ENCODE measurements at regions of chr17 and their contacts with region 1.

Region 1: GRCh38 chr17:82236142-82236981 is 7.5 kb downstream of the SLC16A3 start:
- DNase-seq: peak; percentile 72
- ATAC-seq: peak; percentile 6 to 16

Region 2: GRCh38 chr17:82051776-82052637 is 184.4 kb before region 1 on chr17 and contains the starts of genes GPS1 and RFNG:
- intact Hi-C with region 1: no loop called
- DNase-seq: peak; percentile 86
- ATAC-seq: peak; percentile 63 to 84
- total RNA-seq, gene GPS1: 72.2 to 79.3 TPM
- total RNA-seq, gene RFNG: 16.4 to 22.4 TPM

Region 3: GRCh38 chr17:82173351-82174041 is 62.9 kb before region 1 on chr17:
- intact Hi-C with region 1: no loop called
- DNase-seq: no peak
- ATAC-seq: no peak

Region 4: GRCh38 chr17:82273327-82274133 is 37.2 kb after region 1 on chr17 and contains the start of gene CSNK1D:
- intact Hi-C with region 1: loop called in 1 of 2 experiments (anchors 5 kb)
- DNase-seq: peak; percentile 94
- ATAC-seq: peak; percentile 93 to 97
- total RNA-seq, gene CSNK1D: 63.6 to 88.2 TPM

Region 5: GRCh38 chr17:82292251-82293154 is 56.1 kb after region 1 on chr17:
- intact Hi-C with region 1: loop called in 1 of 2 experiments (anchors 10 kb)
- DNase-seq: peak; percentile 97
- ATAC-seq: peak; percentile 96 to 97

Region 6: DNA sequence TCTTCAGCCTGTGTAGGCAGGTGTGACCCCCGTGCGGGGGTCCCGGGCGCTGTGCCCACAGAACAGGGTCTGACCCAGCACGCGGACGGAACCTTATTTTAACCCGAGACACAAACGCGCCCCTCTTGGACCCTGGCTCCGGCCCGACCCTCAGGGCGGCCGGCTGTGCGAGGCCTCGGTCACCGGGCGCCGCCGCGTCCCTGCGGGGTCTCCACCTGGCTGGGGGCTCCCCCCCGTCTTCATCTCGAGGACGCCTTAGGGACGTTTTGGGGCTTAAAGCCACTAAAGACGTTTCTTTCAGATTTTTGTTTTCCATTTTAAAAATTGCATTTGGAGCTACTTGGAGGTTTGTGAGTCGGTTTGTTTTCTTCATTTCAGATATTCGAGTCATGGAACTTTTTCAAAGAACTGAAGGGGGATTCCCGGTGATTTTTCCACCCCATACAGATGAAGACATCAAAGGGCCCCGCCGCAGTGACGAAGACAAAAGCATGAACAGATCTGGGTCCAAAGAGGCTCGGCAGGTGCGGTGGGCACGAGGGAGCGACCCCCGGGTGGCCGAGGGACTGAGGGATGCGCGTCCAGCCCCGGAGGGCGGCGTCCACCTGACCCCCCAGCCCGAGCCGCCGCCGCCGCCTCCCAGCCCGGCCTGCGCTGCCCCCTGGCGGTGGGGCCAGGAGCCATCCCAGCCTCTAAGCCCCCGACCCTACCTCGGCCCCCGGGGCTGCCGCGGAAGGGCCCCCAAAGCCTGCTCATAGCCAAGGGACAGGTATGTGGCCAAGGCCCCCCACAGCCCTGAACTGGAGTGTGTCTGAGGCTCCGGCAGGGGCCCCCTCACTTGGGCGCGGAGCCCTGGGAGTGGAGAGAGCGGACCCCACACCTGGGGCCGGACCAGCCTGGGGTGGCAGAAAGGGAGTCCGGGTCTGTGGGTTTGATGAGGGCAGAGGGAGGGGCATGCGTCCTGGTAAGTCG is 84.9 kb after region 1 on chr17:
- intact Hi-C with region 1: loop called (anchors 2 to 5 kb)
- DNase-seq: no peak
- ATAC-seq: peak in 1 of 2 donors; percentile 54

Measured in left cardiac atrium (tissue), 4 donors.